Activated naive CD4-positive, alpha-beta T cell treated with anti-CD3 and anti-CD28 coated beads for 36 hours (primary cell): ENCODE measurements at regions of chr9 and their contacts with region 1.

Region 1: GRCh38 chr9:111896353-111896958 is at the start of gene UGCG:
- DNase-seq: peak; percentile 86
- H3K4me3 Mint-ChIP-seq: peak within 1 kb of the TSS; percentile 81
- H3K27ac Mint-ChIP-seq: peak within 1 kb of the TSS; percentile 87
- H3K4me1 Mint-ChIP-seq: peaks cover 17% of the 10 kb centered on the region
- H3K27me3 Mint-ChIP-seq: no peaks in the 10 kb centered on the region
- total RNA-seq, gene UGCG: 8.8 to 10.5 TPM

Region 2: GRCh38 chr9:111631071-111631971 is 265.1 kb before region 1 on chr9 and contains the start of gene DNAJC25:
- CTCF ChIA-PET with region 1: no interaction called
- intact Hi-C with region 1: loop called (anchors 1 kb)
- DNase-seq: peak; percentile 97
- H3K4me3 Mint-ChIP-seq: peak within 1 kb of the TSS; percentile 92
- H3K27ac Mint-ChIP-seq: peak within 1 kb of the TSS; percentile 79
- H3K4me1 Mint-ChIP-seq: peaks cover 42% of the 10 kb centered on the region
- H3K27me3 Mint-ChIP-seq: no peaks in the 10 kb centered on the region
- total RNA-seq, gene DNAJC25: 3.4 to 3.9 TPM

Region 3: DNA sequence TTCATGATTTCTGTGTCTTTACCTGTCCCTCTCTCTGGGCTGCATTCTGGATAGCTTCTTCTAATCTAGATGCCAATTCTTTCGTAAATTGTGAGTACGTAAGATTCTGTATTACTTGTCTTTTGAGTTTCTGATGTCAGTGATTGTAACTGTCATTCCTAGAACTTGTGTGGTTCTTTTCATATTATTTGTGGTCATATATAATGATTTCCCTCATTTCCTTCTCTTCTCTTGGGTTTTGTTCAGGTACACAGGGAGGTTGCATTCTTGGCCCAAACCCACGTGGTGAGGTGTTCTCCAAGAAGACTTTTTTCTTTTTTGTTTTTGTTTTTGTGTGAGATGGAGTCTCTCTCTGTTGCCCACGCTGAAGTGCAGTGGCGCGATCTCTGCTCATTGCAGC is 14.0 kb after region 1 on chr9:
- CTCF ChIA-PET with region 1: interaction called, 19 read pairs
- intact Hi-C with region 1: loop called (anchors 1 kb)
- DNase-seq: peak; percentile 42
- H3K4me3 Mint-ChIP-seq: no peak overlapping the region
- H3K27ac Mint-ChIP-seq: no peak overlapping the region
- H3K4me1 Mint-ChIP-seq: peaks cover 82% of the 10 kb centered on the region
- H3K27me3 Mint-ChIP-seq: no peaks in the 10 kb centered on the region

Region 4: GRCh38 chr9:111926421-111926875 is 30.0 kb after region 1 on chr9:
- CTCF ChIA-PET with region 1: interaction called, 3 read pairs
- intact Hi-C with region 1: loop called (anchors 1 kb)
- DNase-seq: peak; percentile 70
- H3K4me3 Mint-ChIP-seq: no peak overlapping the region
- H3K27ac Mint-ChIP-seq: peak overlapping the region; percentile 46
- H3K4me1 Mint-ChIP-seq: peaks cover 25% of the 10 kb centered on the region
- H3K27me3 Mint-ChIP-seq: no peaks in the 10 kb centered on the region

Region 5: GRCh38 chr9:111965566-111966019 is 69.1 kb after region 1 on chr9:
- CTCF ChIA-PET with region 1: no interaction called
- intact Hi-C with region 1: loop called (anchors 2 kb)
- DNase-seq: peak; percentile 55
- H3K4me3 Mint-ChIP-seq: no peak overlapping the region
- H3K27ac Mint-ChIP-seq: no peak overlapping the region
- H3K4me1 Mint-ChIP-seq: peaks cover 5% of the 10 kb centered on the region
- H3K27me3 Mint-ChIP-seq: no peaks in the 10 kb centered on the region

Region 6: DNA sequence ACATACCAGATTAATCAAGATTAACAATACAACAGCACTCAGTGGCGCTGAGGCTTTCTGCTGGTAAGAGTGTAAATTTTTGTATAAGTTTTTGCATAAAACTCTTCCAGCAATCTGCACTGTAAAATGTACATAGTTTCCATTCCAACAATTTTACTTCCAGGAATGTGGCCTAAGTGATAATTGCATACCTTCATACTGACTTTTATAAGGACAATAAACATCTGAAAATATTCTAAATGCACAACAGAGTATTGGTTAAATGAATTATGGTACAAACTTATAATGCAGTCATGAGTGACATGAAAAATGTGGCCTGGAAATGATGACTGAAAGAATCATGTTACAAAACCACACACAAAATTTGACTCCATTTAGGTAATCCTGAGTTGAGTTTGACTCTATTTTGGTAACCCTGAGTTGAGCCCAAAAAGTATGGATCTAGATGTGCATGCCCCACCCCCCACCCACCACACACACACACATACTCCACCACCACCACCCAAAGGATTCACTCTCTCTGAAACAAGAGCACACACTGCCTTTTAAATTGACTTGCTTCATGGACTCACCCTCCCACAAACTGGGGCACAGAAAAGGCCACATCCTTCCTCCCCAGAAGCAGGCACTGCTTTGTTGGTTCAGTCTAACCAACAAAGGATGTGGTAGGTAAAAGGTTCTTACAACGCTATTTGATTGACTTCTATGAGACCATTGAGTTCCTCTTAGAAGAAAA is 141.0 kb after region 1 on chr9:
- CTCF ChIA-PET with region 1: no interaction called
- intact Hi-C with region 1: loop called (anchors 1 kb)
- DNase-seq: peak; percentile 79
- H3K4me3 Mint-ChIP-seq: no peak overlapping the region
- H3K27ac Mint-ChIP-seq: peak overlapping the region; percentile 76
- H3K4me1 Mint-ChIP-seq: peaks cover 45% of the 10 kb centered on the region
- H3K27me3 Mint-ChIP-seq: peaks cover 4% of the 10 kb centered on the region

Region 7: DNA sequence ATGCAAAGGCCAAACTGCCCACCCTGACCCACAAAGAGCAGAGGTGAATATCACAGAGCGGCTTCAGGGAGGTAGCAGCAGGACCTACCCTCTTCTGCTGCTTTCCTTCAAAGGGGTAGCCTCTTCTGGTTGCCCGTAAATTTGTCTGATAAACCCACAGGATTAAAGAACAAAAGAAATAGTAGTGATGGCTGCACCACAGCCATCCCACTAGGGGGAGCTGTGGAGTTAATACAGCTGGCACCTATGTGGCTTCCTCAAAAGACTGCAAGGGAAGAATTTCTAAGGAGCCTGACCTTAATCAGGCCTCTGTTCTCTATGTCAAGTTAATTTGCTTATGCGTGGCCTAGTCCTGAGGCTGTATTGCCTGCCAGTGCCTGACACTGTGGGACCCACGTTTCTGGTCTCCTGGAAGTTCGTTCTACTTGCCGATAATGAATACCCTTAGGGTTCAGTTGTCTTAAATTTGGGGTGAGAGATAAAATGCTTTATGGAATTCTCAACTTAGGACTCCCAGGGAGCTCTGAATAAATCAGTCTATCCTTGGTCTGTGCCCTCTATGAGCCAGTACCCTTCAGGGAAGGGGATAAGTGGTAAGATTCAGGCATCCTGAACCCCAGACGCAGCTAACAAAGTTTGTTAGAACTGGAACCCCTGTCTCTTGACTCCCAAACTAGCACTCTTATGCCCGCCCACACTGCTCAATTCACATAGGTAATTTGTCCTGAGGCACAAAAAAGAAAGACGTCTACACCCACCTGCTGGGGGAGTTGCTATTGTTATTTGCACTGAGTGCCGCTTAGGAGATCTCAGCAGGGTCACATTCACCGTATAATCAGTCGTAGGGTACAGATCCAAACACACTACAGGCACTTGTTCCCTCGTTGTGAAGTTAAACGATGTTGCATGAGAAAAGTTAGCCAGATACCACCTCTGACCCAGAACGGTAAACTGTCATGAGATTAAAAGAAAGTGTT is 201.5 kb after region 1 on chr9:
- CTCF ChIA-PET with region 1: no interaction called
- intact Hi-C with region 1: no loop called
- DNase-seq: peak; percentile 83
- H3K4me3 Mint-ChIP-seq: no peak overlapping the region
- H3K27ac Mint-ChIP-seq: no peak overlapping the region
- H3K4me1 Mint-ChIP-seq: peaks cover 16% of the 10 kb centered on the region
- H3K27me3 Mint-ChIP-seq: no peaks in the 10 kb centered on the region

Region 8: GRCh38 chr9:112750111-112750767 is 853.8 kb after region 1 on chr9 and contains the start of gene SNX30:
- CTCF ChIA-PET with region 1: no interaction called
- intact Hi-C with region 1: loop called (anchors 10 kb)
- DNase-seq: peak; percentile 84
- H3K4me3 Mint-ChIP-seq: peak within 1 kb of the TSS; percentile 81
- H3K27ac Mint-ChIP-seq: peak within 1 kb of the TSS; percentile 74
- H3K4me1 Mint-ChIP-seq: peaks cover 63% of the 10 kb centered on the region
- H3K27me3 Mint-ChIP-seq: no peaks in the 10 kb centered on the region
- total RNA-seq, gene SNX30: 4.1 to 4.6 TPM